ENCODE measurements at regions of chr20 and their contacts with region 1.

Region 1: GRCh38 chr20:59165891-59166709 is 2.5 kb downstream of the ZNF831 start:
- DNase-seq: peak; percentile 75
- H3K4me3 Mint-ChIP-seq: peak overlapping the region; percentile 87
- H3K27ac Mint-ChIP-seq: peak overlapping the region; percentile 88
- H3K4me1 Mint-ChIP-seq: peaks cover 73% of the 10 kb centered on the region
- H3K27me3 Mint-ChIP-seq: no peaks in the 10 kb centered on the region

Region 2: GRCh38 chr20:59177261-59178250 is 11.5 kb after region 1 on chr20:
- intact Hi-C with region 1: loop called (anchors 1 kb)
- DNase-seq: peak; percentile 83
- H3K4me3 Mint-ChIP-seq: peak overlapping the region; percentile 63
- H3K27ac Mint-ChIP-seq: peak overlapping the region; percentile 95
- H3K4me1 Mint-ChIP-seq: peaks cover 60% of the 10 kb centered on the region
- H3K27me3 Mint-ChIP-seq: peaks cover 1% of the 10 kb centered on the region

Region 3: GRCh38 chr20:59253779-59254319 is 87.7 kb after region 1 on chr20:
- intact Hi-C with region 1: loop called (anchors 5 kb)
- DNase-seq: peak; percentile 78
- H3K4me3 Mint-ChIP-seq: peak overlapping the region; percentile 75
- H3K27ac Mint-ChIP-seq: peak overlapping the region; percentile 93
- H3K4me1 Mint-ChIP-seq: peaks cover 45% of the 10 kb centered on the region
- H3K27me3 Mint-ChIP-seq: no peaks in the 10 kb centered on the region